PC-9 (cell line): ENCODE measurements at regions of chr16 and their contacts with region 1.

Region 1: GRCh38 chr16:53789137-53789536 is 85.2 kb downstream of the FTO start:
- DNase-seq: no peak
- H3K4me3 ChIP-seq: no peak overlapping the region
- H3K27ac ChIP-seq: no peak overlapping the region
- H3K4me1 ChIP-seq: peaks cover 20% of the 10 kb centered on the region
- H3K27me3 ChIP-seq: no peaks in the 10 kb centered on the region
- CTCF ChIP-seq: no peak

Region 2: GRCh38 chr16:53865494-53865863 is 76.3 kb after region 1 on chr16:
- CTCF ChIA-PET with region 1: no interaction called
- POLR2A ChIA-PET with region 1: no interaction called
- intact Hi-C with region 1: loop called (anchors 10 kb)
- DNase-seq: peak in 1 of 2 experiments; percentile 44
- H3K4me3 ChIP-seq: no peak overlapping the region
- H3K27ac ChIP-seq: peak overlapping the region; percentile 86
- H3K4me1 ChIP-seq: peaks cover 35% of the 10 kb centered on the region
- H3K27me3 ChIP-seq: no peaks in the 10 kb centered on the region
- CTCF ChIP-seq: no peak